Mucosa of descending colon (tissue), 3 donors: ENCODE measurements at regions of chr6 and their contacts with region 1.

Region 1: DNA sequence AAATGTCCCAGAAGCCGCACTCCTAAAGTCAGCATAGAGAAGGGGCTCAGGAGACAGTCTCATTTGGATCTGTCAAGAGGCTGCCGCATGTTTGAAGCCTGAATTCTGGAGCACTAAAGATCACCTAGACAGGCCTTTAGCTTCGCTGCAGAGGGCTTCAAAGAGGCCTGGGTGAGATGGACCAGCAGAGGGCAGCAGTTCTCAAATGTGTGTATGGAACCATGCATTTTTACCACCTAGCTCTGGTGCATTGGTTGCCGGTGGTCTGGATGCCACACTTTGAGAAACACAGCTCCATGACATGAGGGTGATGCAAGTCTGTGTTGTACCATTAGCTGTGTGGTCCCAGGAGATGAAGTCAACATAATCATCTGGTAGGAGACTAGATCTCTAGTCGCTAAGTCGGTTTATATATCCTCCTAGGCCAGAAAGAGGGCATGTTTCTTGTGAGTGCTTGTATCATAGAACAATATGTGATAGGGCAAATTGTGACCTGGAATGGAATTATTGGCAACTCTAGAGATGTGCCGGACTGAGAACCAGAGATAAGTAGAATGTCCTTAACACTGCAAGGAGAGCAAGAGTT is 64.8 kb downstream of the KIAA0319 start:
- DNase-seq: peak in 2 of 3 donors; percentile 78 to 94
- ATAC-seq: peak; percentile 92
- H3K4me3 ChIP-seq: no peak overlapping the region
- H3K4me1 ChIP-seq: peaks cover 3% of the 10 kb centered on the region
- CTCF ChIP-seq: peak; percentile 63

Region 2: GRCh38 chr6:24689964-24690363 is 108.8 kb after region 1 on chr6:
- intact Hi-C with region 1: loop called (anchors 1 to 10 kb)
- DNase-seq: no peak
- ATAC-seq: no peak
- H3K4me3 ChIP-seq: no peak overlapping the region
- H3K4me1 ChIP-seq: no peaks in the 10 kb centered on the region
- CTCF ChIP-seq: no peak

Region 3: DNA sequence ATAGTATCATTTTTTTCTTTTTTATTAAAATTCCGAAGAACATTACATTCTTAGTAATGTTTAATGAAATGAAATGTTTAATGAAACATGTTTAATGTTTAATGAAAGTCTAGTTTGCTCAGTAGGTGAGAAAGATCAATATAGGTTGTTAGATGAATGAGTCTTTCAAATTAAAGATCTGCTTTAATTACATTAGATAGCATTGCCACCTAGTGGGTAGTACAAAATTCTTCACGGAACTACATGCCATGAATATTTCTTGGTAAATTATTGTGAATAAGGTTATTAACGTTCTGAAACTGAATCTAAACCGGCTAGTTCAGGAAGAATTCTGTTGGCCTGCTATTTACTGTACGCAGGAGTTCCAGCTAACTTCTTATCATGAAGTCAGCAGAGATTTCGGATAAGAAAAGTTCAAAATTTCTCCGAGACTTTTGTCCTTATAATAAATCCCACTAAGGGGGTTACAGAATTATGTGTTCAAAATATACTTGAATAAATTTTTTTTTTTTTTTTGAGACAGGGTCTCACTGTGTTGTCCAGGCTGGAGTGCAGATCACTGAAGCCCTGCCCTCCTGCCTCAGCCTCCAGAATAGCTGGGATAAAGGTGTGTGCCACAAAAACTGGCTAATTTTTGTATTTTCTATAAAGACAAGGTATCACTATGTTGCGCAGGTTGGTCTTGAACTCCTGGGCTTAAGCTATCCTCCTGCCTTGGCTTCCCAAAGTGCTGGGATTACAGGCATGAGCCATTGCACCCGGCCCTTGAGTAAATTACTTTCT is 185.7 kb after region 1 on chr6:
- intact Hi-C with region 1: loop called in 1 of 2 experiments (anchors 10 kb)
- DNase-seq: no peak
- ATAC-seq: peak; percentile 74
- H3K4me3 ChIP-seq: no peak overlapping the region
- H3K4me1 ChIP-seq: peaks cover 2% of the 10 kb centered on the region
- CTCF ChIP-seq: peak; percentile 14